Calu3 (cell line): ENCODE measurements at regions of chr12 and their contacts with region 1.

Region 1: GRCh38 chr12:89524541-89525285 is at the start of gene GALNT4:
- DNase-seq: peak; percentile 94
- H3K4me3 Mint-ChIP-seq: peak within 1 kb of the TSS; percentile 98
- H3K27ac Mint-ChIP-seq: peak within 1 kb of the TSS; percentile 94
- H3K4me1 Mint-ChIP-seq: peaks cover 34% of the 10 kb centered on the region
- H3K27me3 Mint-ChIP-seq: no peaks in the 10 kb centered on the region
- CTCF ChIP-seq: peak; percentile 85
- total RNA-seq, gene GALNT4: 67.0 and 70.9 TPM in 2 replicates

Region 2: GRCh38 chr12:88111074-88111652 is 1413.5 kb before region 1 on chr12:
- CTCF ChIA-PET with region 1: no interaction called
- intact Hi-C with region 1: loop called (anchors 5 kb)
- DNase-seq: no peak
- H3K4me3 Mint-ChIP-seq: peak overlapping the region; percentile 31
- H3K27ac Mint-ChIP-seq: peak overlapping the region; percentile 51
- H3K4me1 Mint-ChIP-seq: no peaks in the 10 kb centered on the region
- H3K27me3 Mint-ChIP-seq: no peaks in the 10 kb centered on the region
- CTCF ChIP-seq: no peak

Region 3: DNA sequence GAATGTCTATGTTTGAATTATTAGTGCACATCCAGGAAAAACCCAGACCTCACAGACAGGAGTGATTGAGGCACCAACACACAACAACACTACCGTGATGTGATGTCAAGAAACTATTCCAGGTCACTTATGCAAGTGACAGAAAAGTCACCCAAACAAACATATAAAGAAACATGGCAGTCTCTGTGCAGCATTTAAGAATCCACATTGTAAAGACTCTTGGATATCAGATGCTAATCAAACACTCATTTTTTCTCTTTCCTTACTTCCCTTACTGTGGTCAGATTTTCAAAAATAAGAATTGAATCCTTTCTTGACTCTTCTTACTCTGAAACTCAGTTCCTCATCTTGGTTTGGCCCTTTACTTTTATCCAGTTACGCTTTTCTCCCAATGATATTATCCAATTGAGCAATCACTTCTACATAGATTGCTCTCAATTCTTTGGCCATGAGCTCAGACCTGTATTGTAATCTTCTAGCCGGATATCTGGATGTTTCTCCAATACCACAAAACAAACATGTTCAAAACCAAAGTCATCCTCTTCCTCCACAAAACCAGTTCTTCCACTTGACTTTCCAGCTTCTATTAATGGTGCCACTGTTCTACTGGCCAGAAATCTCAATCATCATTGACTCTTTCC is 287.8 kb before region 1 on chr12:
- CTCF ChIA-PET with region 1: no interaction called
- intact Hi-C with region 1: loop called (anchors 5 kb)
- DNase-seq: peak; percentile 53
- H3K4me3 Mint-ChIP-seq: peak overlapping the region; percentile 30
- H3K27ac Mint-ChIP-seq: peak overlapping the region; percentile 86
- H3K4me1 Mint-ChIP-seq: peaks cover 49% of the 10 kb centered on the region
- H3K27me3 Mint-ChIP-seq: no peaks in the 10 kb centered on the region
- CTCF ChIP-seq: no peak

Region 4: GRCh38 chr12:89405626-89406345 is 118.9 kb before region 1 on chr12:
- CTCF ChIA-PET with region 1: no interaction called
- intact Hi-C with region 1: no loop called
- DNase-seq: no peak
- H3K4me3 Mint-ChIP-seq: no peak overlapping the region
- H3K27ac Mint-ChIP-seq: no peak overlapping the region
- H3K4me1 Mint-ChIP-seq: no peaks in the 10 kb centered on the region
- H3K27me3 Mint-ChIP-seq: no peaks in the 10 kb centered on the region
- CTCF ChIP-seq: no peak

Region 5: GRCh38 chr12:89504560-89505346 is 20.0 kb before region 1 on chr12:
- CTCF ChIA-PET with region 1: interaction called, 7 read pairs
- intact Hi-C with region 1: loop called (anchors 1 kb)
- DNase-seq: no peak
- H3K4me3 Mint-ChIP-seq: no peak overlapping the region
- H3K27ac Mint-ChIP-seq: peak overlapping the region; percentile 97
- H3K4me1 Mint-ChIP-seq: peaks cover 66% of the 10 kb centered on the region
- H3K27me3 Mint-ChIP-seq: no peaks in the 10 kb centered on the region
- CTCF ChIP-seq: no peak